ENCODE measurements at regions of chr2 and their contacts with region 1.

Region 1: GRCh38 chr2:1550658-1551316 is 137.5 kb downstream of the TPO start:
- DNase-seq: peak; percentile 33
- H3K4me3 ChIP-seq: no peak overlapping the region
- H3K27ac ChIP-seq: no peak overlapping the region
- H3K4me1 ChIP-seq: peaks cover 6% of the 10 kb centered on the region
- H3K27me3 ChIP-seq: no peaks in the 10 kb centered on the region
- CTCF ChIP-seq: peak; percentile 78 to 94

Region 2: GRCh38 chr2:175880-176800 is 1374.6 kb before region 1 on chr2:
- CTCF ChIA-PET with region 1: no interaction called
- dilution Hi-C with region 1: no loop called
- in situ Hi-C with region 1: no loop called
- intact Hi-C with region 1: loop called (anchors 1 kb)
- DNase-seq: peak; percentile 44
- H3K4me3 ChIP-seq: no peak overlapping the region
- H3K27ac ChIP-seq: no peak overlapping the region
- H3K4me1 ChIP-seq: peaks cover 27% of the 10 kb centered on the region
- H3K27me3 ChIP-seq: no peaks in the 10 kb centered on the region
- CTCF ChIP-seq: no peak

Region 3: GRCh38 chr2:677056-677965 is 873.5 kb before region 1 on chr2 and contains the start of gene TMEM18:
- CTCF ChIA-PET with region 1: interaction called, 3 read pairs
- dilution Hi-C with region 1: no loop called
- in situ Hi-C with region 1: no loop called
- intact Hi-C with region 1: loop called (anchors 1 kb)
- DNase-seq: peak; percentile 97
- H3K4me3 ChIP-seq: peak within 1 kb of the TSS; percentile 68 to 96 (median 95)
- H3K27ac ChIP-seq: peak within 1 kb of the TSS; percentile 92
- H3K4me1 ChIP-seq: peaks cover 25% of the 10 kb centered on the region
- H3K27me3 ChIP-seq: no peaks in the 10 kb centered on the region
- CTCF ChIP-seq: peak; percentile 6 to 39
- total RNA-seq, gene TMEM18: 9.2 to 19.5 TPM

Region 4: GRCh38 chr2:1051064-1051983 is 499.5 kb before region 1 on chr2:
- CTCF ChIA-PET with region 1: no interaction called
- dilution Hi-C with region 1: no loop called
- in situ Hi-C with region 1: no loop called
- intact Hi-C with region 1: loop called (anchors 1 kb)
- DNase-seq: no peak
- H3K4me3 ChIP-seq: no peak overlapping the region
- H3K27ac ChIP-seq: no peak overlapping the region
- H3K4me1 ChIP-seq: peaks cover 7% of the 10 kb centered on the region
- H3K27me3 ChIP-seq: no peaks in the 10 kb centered on the region
- CTCF ChIP-seq: peak; percentile 7 to 27

Region 5: DNA sequence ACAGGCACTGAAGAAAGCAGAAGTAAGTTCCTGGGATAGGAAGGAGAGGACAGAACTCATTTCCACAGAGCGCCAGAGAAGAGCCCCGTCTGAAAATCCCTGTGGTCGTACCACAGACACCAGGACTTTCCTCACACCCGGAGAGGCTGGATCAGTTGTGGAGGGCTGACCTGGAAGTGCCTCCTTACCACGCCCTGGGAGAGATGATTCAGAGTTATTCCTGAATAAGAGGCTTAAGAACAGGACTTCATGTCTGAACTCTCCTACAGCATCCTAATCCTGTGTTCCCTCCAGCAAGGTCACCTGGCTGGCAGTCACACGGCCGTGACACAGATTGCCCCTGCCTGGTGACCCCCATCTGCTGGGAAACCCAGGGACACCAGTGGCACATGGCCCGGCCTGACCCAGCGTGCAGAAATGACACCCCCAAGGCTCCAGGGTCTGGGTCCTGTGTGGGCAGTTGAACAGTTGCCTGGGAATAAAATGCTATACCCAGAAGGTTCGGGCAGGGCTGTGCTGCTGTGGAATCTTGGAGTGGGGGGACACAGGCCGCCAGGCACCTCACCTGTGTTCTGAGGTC is 87.6 kb after region 1 on chr2:
- CTCF ChIA-PET with region 1: interaction called, 3 read pairs
- dilution Hi-C with region 1: loop called (anchors 5 kb)
- in situ Hi-C with region 1: no loop called
- intact Hi-C with region 1: no loop called
- DNase-seq: peak; percentile 52
- H3K4me3 ChIP-seq: no peak overlapping the region
- H3K27ac ChIP-seq: no peak overlapping the region
- H3K4me1 ChIP-seq: peaks cover 17% of the 10 kb centered on the region
- H3K27me3 ChIP-seq: no peaks in the 10 kb centered on the region
- CTCF ChIP-seq: no peak

Region 6: DNA sequence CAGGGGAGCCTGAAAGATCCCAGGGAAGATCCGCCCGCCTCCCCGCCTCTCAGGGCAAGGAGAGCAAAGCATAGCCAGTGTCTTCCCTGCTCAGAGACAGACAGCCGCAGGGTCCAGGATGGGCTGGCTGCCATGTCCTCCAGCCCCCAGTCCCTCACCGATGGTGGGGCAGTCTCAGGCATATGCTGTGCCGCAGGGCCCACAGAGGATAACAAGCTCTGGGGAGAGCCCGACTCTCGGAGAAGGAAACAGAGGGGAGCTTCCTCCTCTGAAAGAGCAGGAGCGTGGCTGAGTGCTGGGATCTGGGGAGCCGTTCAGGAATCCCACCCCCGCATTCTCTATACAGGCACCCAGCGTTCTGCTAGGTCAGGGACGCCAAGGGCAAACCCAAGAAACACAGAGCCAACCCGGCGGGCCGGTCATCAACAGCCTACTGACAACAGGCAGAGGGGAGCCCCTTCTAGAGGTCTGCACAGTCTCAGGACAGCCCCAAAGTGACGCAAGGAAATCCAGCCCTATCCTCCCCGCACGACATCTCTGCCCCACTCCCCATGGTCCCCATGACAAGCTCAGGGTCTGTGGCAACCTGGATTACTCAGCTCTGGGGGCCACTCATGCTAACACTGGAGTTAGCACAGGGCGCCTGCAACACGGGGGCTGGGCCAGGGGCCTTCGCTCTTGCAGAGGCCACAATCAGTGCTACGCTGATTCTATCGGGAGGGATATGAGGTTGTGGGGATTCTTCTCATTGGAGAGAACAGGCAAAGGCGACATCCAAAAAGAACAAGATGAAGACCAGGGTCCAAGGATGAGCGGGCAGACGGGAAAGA is 111.8 kb after region 1 on chr2:
- CTCF ChIA-PET with region 1: no interaction called
- dilution Hi-C with region 1: no loop called
- in situ Hi-C with region 1: no loop called
- intact Hi-C with region 1: no loop called
- DNase-seq: no peak
- H3K4me3 ChIP-seq: no peak overlapping the region
- H3K27ac ChIP-seq: no peak overlapping the region
- H3K4me1 ChIP-seq: no peaks in the 10 kb centered on the region
- H3K27me3 ChIP-seq: no peaks in the 10 kb centered on the region
- CTCF ChIP-seq: no peak

Region 7: GRCh38 chr2:1736997-1737480 is 186.3 kb after region 1 on chr2:
- CTCF ChIA-PET with region 1: no interaction called
- dilution Hi-C with region 1: loop called (anchors 5 kb)
- in situ Hi-C with region 1: loop called in 1 of 2 experiments (anchors 10 kb)
- intact Hi-C with region 1: no loop called
- DNase-seq: no peak
- H3K4me3 ChIP-seq: no peak overlapping the region
- H3K27ac ChIP-seq: no peak overlapping the region
- H3K4me1 ChIP-seq: peaks cover 2% of the 10 kb centered on the region
- H3K27me3 ChIP-seq: no peaks in the 10 kb centered on the region
- CTCF ChIP-seq: no peak

Region 8: GRCh38 chr2:1817256-1818051 is 266.7 kb after region 1 on chr2:
- CTCF ChIA-PET with region 1: no interaction called
- dilution Hi-C with region 1: no loop called
- in situ Hi-C with region 1: no loop called
- intact Hi-C with region 1: loop called (anchors 2 kb)
- DNase-seq: peak; percentile 81
- H3K4me3 ChIP-seq: no peak overlapping the region
- H3K27ac ChIP-seq: no peak overlapping the region
- H3K4me1 ChIP-seq: peaks cover 8% of the 10 kb centered on the region
- H3K27me3 ChIP-seq: no peaks in the 10 kb centered on the region
- CTCF ChIP-seq: peak; percentile 89 to 98